Spleen (tissue), 13 donors: ENCODE measurements at regions of chr5 and their contacts with region 1.

Region 1: GRCh38 chr5:18314192-18314778 is 680.0 kb downstream of the TAF11L14 start:
- DNase-seq: no peak
- H3K4me3 ChIP-seq: no peak overlapping the region
- H3K27ac ChIP-seq: no peak overlapping the region
- H3K4me1 ChIP-seq: peaks cover 0 to 6% (median 0%) of the 10 kb centered on the region in 6 donors
- H3K27me3 ChIP-seq: no peaks in the 10 kb centered on the region
- CTCF ChIP-seq: peak in 8 of 11 experiments; percentile 20 to 57 (median 34)
- POLR2A ChIP-seq: no peak

Region 2: GRCh38 chr5:17216176-17216973 is 1097.9 kb before region 1 on chr5:
- intact Hi-C with region 1: loop called (anchors 10 kb)
- DNase-seq: peak; percentile 93
- H3K4me3 ChIP-seq: peak overlapping the region; percentile 25 to 87 (median 46)
- H3K27ac ChIP-seq: peak overlapping the region in 7 of 8 donors; percentile 77 to 96 (median 88)
- H3K4me1 ChIP-seq: peaks cover 2 to 72% (median 27%) of the 10 kb centered on the region in 6 donors
- H3K27me3 ChIP-seq: peaks cover 0 to 46% (median 18%) of the 10 kb centered on the region in 7 donors
- CTCF ChIP-seq: peak; percentile 67 to 90 (median 82)
- POLR2A ChIP-seq: no peak

Region 3: DNA sequence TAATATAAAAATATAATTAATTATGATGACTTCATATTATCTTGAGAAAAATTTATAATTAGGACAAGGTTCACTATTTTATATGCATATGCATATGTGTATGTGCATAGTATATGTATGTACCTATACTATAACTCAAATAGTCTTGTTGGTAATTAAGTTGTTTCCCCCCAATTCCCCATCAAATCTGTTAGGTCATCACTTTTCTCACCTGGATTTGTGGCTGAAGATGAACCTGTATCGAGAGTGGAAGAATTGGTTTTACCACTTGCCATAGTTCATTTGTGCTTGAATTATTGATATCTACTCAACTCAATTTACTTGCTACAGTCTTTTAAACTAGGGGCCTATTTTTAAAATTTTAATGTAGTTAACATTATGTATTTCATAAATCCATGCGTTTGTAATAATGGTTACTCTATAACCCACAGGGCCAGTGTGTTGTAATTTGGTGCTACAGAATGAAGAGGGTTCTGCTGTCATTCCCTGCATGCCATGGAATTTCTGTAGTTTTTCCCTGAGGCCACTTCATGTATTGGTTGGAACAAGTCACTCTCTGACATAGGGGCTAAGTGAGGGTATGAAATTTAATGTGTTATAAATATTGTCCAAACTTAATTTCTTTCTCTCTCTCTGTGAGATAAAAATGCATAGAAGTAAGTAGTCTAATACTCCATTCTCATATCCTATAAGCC is 605.1 kb before region 1 on chr5:
- intact Hi-C with region 1: no loop called
- DNase-seq: no peak
- H3K4me3 ChIP-seq: no peak overlapping the region
- H3K27ac ChIP-seq: no peak overlapping the region
- H3K4me1 ChIP-seq: no peaks in the 10 kb centered on the region
- H3K27me3 ChIP-seq: no peaks in the 10 kb centered on the region
- CTCF ChIP-seq: no peak
- POLR2A ChIP-seq: no peak

Region 4: DNA sequence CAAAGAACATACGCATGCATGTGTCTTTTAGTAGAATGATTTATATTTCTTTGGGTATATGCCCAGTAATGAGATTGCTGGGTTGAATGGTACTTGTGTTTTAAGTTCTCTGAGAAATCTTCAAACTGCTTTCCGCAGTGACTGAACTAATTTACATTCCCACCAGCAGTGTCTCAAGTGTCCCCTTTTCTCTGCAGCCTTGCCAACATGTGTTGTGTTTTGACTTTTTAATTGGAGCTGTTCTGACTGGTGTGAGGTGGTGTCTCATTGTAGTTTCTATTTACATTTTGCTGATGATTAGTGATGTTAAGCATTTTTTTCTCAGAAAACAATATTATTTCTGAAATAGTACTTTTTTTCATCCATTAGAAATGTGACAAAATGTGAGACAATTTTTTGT is 89.8 kb after region 1 on chr5:
- intact Hi-C with region 1: no loop called
- DNase-seq: no peak
- H3K4me3 ChIP-seq: no peak overlapping the region
- H3K27ac ChIP-seq: no peak overlapping the region
- H3K4me1 ChIP-seq: no peaks in the 10 kb centered on the region
- H3K27me3 ChIP-seq: no peaks in the 10 kb centered on the region
- CTCF ChIP-seq: no peak
- POLR2A ChIP-seq: no peak